Left colon (tissue), 2 donors: ENCODE measurements at regions of chr10 and their contacts with region 1.

Region 1: DNA sequence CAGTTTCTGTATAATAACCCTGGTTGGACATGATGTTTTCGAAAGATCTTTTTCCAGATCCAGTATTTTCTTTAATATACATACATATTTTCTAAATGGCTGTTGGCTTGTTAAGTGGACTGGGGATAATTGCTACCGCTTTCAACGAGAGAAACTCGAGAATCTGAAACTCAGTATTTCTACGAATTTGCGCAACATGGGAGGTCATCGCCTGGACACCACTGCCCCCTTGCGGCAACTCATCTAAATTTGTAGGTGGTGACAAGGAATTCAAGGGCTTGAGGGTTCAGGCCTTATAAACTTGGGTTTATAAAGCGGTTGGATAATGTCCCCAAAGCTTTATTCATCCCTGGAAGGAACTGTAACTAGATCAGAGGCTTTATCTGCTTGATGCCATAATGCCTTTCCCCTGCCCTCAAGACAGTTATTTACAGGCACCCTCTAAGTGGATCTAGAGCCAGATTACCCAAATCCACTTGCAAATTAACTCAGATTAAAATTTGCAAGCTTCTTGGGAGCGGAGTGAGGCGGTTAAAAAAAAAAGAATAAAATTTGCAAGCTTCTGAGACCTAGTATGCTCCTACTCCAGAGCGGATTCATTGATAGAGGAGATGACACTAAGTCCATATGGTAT is 21.3 kb upstream of the KCNK18 start:
- DNase-seq: peak; percentile 40 to 89
- ATAC-seq: peak; percentile 65

Region 2: DNA sequence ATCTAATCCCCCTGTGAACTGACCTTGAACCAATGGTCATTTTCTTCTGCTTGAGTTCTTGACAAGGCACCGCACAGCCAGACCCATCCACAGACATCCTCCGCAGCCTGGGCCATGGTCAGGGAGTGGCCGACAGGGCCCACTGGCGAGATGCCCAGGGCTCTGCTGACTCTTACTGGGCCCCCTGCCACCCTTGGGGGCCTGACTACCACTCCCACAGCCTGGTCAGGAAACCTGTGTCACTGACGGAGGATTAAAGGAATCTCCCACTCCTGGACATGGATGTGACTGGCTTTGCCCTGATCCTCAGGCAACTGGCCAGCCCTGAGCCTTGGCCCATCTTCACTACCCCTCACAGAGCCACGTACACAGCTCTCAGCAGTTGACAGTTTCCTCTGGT is 377.2 kb before region 1 on chr10:
- intact Hi-C with region 1: loop called in 1 of 2 experiments (anchors 2 kb)
- DNase-seq: no peak
- ATAC-seq: no peak

Region 3: GRCh38 chr10:116849248-116850057 is 326.6 kb before region 1 on chr10 and contains the start of gene ENO4:
- intact Hi-C with region 1: no loop called
- DNase-seq: peak; percentile 83 to 88
- ATAC-seq: peak; percentile 97
- total RNA-seq, gene ENO4: 0.37 TPM in 1 of 2 donors, not detected in the other

Region 4: GRCh38 chr10:117431160-117431559 is 255.1 kb after region 1 on chr10:
- intact Hi-C with region 1: no loop called
- DNase-seq: no peak
- ATAC-seq: no peak